Activated B cell treated with CpG ODN at 0.5 μM for 24 hours (primary cell): ENCODE measurements at regions of chr1 and their contacts with region 1.

Region 1: GRCh38 chr1:117929173-117929989 is at the starts of genes GDAP2 and WDR3:
- DNase-seq: peak; percentile 84
- ATAC-seq: peak; percentile 91
- H3K4me3 Mint-ChIP-seq: peak within 1 kb of the TSS; percentile 94
- H3K27ac Mint-ChIP-seq: peak within 1 kb of the TSS; percentile 91
- H3K4me1 Mint-ChIP-seq: peaks cover 57% of the 10 kb centered on the region
- H3K27me3 Mint-ChIP-seq: no peaks in the 10 kb centered on the region
- CTCF ChIP-seq: no peak
- total RNA-seq, gene GDAP2: 19.6 and 20.6 TPM in 2 replicates
- total RNA-seq, gene WDR3: 32.7 and 38.0 TPM in 2 replicates

Region 2: GRCh38 chr1:115976062-115976920 is 1953.1 kb before region 1 on chr1 and contains the start of gene SLC22A15:
- CTCF ChIA-PET with region 1: no interaction called
- POLR2A ChIA-PET with region 1: no interaction called
- intact Hi-C with region 1: loop called (anchors 10 kb)
- DNase-seq: peak; percentile 63
- ATAC-seq: peak; percentile 90
- H3K4me3 Mint-ChIP-seq: peak within 1 kb of the TSS; percentile 82
- H3K27ac Mint-ChIP-seq: peak within 1 kb of the TSS; percentile 71
- H3K4me1 Mint-ChIP-seq: peaks cover 16% of the 10 kb centered on the region
- H3K27me3 Mint-ChIP-seq: peaks cover 3% of the 10 kb centered on the region
- CTCF ChIP-seq: no peak
- total RNA-seq, gene SLC22A15: 4.1 and 4.6 TPM in 2 replicates

Region 3: GRCh38 chr1:117527566-117528102 is 401.7 kb before region 1 on chr1:
- CTCF ChIA-PET with region 1: no interaction called
- POLR2A ChIA-PET with region 1: no interaction called
- intact Hi-C with region 1: no loop called
- DNase-seq: no peak
- ATAC-seq: no peak
- H3K4me3 Mint-ChIP-seq: no peak overlapping the region
- H3K27ac Mint-ChIP-seq: no peak overlapping the region
- H3K4me1 Mint-ChIP-seq: no peaks in the 10 kb centered on the region
- H3K27me3 Mint-ChIP-seq: no peaks in the 10 kb centered on the region
- CTCF ChIP-seq: no peak